ENCODE measurements at regions of chr18 and their contacts with region 1.

Region 1: GRCh38 chr18:54269893-54270844 is 852 bp downstream of the POLI start:
- DNase-seq: peak in 1 of 2 experiments; percentile 41
- H3K4me3 ChIP-seq: peak overlapping the region; percentile 47
- H3K4me3 Mint-ChIP-seq: peak overlapping the region; percentile 90
- H3K27ac Mint-ChIP-seq: peak overlapping the region; percentile 96
- H3K4me1 ChIP-seq: peaks cover 5% of the 10 kb centered on the region; the same call in 1 of the 2 replicates
- H3K4me1 Mint-ChIP-seq: no peaks in the 10 kb centered on the region
- H3K27me3 ChIP-seq: no peaks in the 10 kb centered on the region
- H3K27me3 Mint-ChIP-seq: no peaks in the 10 kb centered on the region
- CTCF ChIP-seq: peak in 1 of 2 experiments; percentile 38

Region 2: GRCh38 chr18:54173980-54174630 is 96.1 kb before region 1 on chr18:
- CTCF ChIA-PET with region 1: no interaction called
- POLR2A ChIA-PET with region 1: no interaction called
- intact Hi-C with region 1: loop called (anchors 10 kb)
- DNase-seq: no peak
- H3K4me3 ChIP-seq: no peak overlapping the region
- H3K4me3 Mint-ChIP-seq: no peak overlapping the region
- H3K27ac Mint-ChIP-seq: no peak overlapping the region
- H3K4me1 ChIP-seq: no peaks in the 10 kb centered on the region
- H3K4me1 Mint-ChIP-seq: peaks cover 8% of the 10 kb centered on the region
- H3K27me3 ChIP-seq: no peaks in the 10 kb centered on the region
- H3K27me3 Mint-ChIP-seq: no peaks in the 10 kb centered on the region
- CTCF ChIP-seq: no peak

Region 3: DNA sequence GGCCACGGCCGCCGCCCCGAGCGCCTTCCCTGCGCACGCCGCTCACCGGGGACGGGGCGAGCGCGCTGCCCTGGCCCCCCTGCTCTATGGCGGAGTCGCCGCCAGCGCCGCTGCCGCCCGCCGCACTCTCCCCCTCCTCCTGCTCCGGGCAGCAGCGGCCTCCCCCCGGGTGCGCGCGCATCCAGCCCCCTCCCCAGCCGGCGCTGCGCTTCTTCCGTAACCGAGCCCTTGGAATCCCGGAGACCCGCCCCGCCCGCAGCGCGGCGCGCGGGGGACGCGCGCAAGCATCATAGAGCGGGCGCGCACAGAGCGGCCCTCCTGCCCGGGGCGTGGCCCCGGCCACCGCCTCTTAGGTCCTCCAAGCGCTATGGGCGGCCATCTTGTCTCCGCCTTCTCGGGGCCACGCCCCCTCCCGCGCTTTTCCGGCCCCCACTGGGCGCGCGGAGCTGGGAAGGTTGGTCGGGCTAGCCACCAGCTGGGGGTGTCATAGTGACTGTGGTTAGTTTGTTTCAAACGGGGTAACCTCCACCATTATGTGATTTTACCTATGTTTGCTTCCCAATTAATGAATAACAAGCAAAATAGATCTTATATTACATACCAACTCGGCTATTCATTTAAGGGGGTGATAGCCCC is 45.7 kb before region 1 on chr18 and contains the start of gene MBD2:
- CTCF ChIA-PET with region 1: interaction called, 14 read pairs
- POLR2A ChIA-PET with region 1: interaction called, 4 read pairs
- intact Hi-C with region 1: loop called (anchors 1 kb)
- DNase-seq: peak; percentile 90 to 92
- H3K4me3 ChIP-seq: peak within 1 kb of the TSS; percentile 58
- H3K4me3 Mint-ChIP-seq: peak within 1 kb of the TSS; percentile 84
- H3K27ac Mint-ChIP-seq: peak within 1 kb of the TSS; percentile 67
- H3K4me1 ChIP-seq: peaks cover 5% of the 10 kb centered on the region
- H3K4me1 Mint-ChIP-seq: peaks cover 7% of the 10 kb centered on the region
- H3K27me3 ChIP-seq: no peaks in the 10 kb centered on the region
- H3K27me3 Mint-ChIP-seq: no peaks in the 10 kb centered on the region
- CTCF ChIP-seq: peak in 1 of 2 experiments; percentile 35
- total RNA-seq, gene MBD2: 19.9 and 23.2 TPM in 2 replicates

Region 4: GRCh38 chr18:54232485-54233227 is 37.5 kb before region 1 on chr18:
- CTCF ChIA-PET with region 1: interaction called, 6 read pairs
- POLR2A ChIA-PET with region 1: no interaction called
- intact Hi-C with region 1: loop called (anchors 2 kb)
- DNase-seq: no peak
- H3K4me3 ChIP-seq: no peak overlapping the region
- H3K4me3 Mint-ChIP-seq: no peak overlapping the region
- H3K27ac Mint-ChIP-seq: no peak overlapping the region
- H3K4me1 ChIP-seq: no peaks in the 10 kb centered on the region
- H3K4me1 Mint-ChIP-seq: peaks cover 21% of the 10 kb centered on the region
- H3K27me3 ChIP-seq: no peaks in the 10 kb centered on the region
- H3K27me3 Mint-ChIP-seq: no peaks in the 10 kb centered on the region
- CTCF ChIP-seq: no peak

Region 5: DNA sequence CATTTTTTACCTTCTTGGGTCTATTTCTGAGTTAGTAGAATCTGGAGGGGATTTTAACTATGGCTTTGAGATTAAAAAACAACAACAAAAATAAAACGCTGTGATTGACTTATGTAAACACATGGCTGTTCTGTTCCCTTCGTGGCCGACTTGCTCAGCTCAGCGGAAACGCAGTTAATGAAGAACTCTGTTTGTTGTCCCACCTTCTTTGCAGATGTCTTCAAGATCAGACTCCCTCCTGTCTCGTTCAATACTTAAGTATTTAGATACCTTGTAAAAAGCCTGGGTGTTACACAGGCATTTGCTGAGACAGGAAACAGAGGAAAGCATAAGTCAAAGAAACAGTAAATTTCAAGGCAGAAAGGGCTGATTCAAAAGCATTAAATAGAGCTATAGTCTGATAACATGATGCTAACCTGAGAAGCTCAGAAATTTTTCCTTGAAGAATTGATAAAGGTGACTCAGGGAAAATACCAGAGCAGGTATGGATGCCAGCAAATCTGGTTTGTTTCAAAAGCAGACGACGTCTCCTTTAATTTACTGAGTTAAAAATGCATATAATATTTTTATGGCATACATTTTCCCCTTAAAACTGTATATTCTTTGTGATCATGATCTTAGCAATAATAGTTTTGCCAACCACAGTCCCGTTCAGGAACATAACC is 22.5 kb before region 1 on chr18:
- CTCF ChIA-PET with region 1: no interaction called
- POLR2A ChIA-PET with region 1: interaction called, 8 read pairs
- intact Hi-C with region 1: loop called (anchors 1 kb)
- DNase-seq: no peak
- H3K4me3 ChIP-seq: no peak overlapping the region
- H3K4me3 Mint-ChIP-seq: no peak overlapping the region
- H3K27ac Mint-ChIP-seq: peak overlapping the region; percentile 73
- H3K4me1 ChIP-seq: peaks cover 17% of the 10 kb centered on the region
- H3K4me1 Mint-ChIP-seq: peaks cover 6% of the 10 kb centered on the region
- H3K27me3 ChIP-seq: no peaks in the 10 kb centered on the region
- H3K27me3 Mint-ChIP-seq: no peaks in the 10 kb centered on the region
- CTCF ChIP-seq: no peak

Region 6: DNA sequence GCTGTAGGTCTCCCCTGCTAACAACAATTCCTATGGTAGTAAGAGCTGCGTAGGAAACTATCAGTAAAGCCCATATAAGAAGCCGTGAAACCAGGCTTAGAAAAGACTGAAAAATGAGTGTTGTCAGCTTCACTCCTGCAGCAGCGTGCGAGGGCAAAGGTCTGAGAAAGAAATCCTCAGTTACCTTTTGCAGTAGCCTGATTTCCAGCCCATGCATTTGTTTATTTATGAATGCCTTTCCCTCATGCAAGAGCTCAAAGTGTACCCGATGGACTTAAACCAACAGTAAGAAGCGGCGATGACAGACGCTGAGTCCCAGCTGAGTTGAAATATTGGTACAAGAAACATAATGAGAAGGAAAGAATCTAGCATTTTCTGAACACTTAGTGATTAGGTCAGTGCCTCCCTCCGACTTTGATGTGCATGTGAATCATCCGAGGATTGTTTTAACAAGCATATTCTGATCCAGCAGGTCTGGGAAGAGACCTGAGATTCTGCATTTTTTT is 15.9 kb before region 1 on chr18:
- CTCF ChIA-PET with region 1: interaction called, 4 read pairs
- POLR2A ChIA-PET with region 1: interaction called, 8 read pairs
- intact Hi-C with region 1: loop called (anchors 2 kb)
- DNase-seq: peak; percentile 66 to 69
- H3K4me3 ChIP-seq: peak overlapping the region; percentile 12
- H3K4me3 Mint-ChIP-seq: peak overlapping the region; percentile 76
- H3K27ac Mint-ChIP-seq: peak overlapping the region; percentile 91
- H3K4me1 ChIP-seq: peaks cover 24% of the 10 kb centered on the region
- H3K4me1 Mint-ChIP-seq: peaks cover 6% of the 10 kb centered on the region
- H3K27me3 ChIP-seq: no peaks in the 10 kb centered on the region
- H3K27me3 Mint-ChIP-seq: no peaks in the 10 kb centered on the region
- CTCF ChIP-seq: no peak